ENCODE measurements at regions of chr18 and their contacts with region 1.

Region 1: GRCh38 chr18:48136531-48137332 is 206.3 kb upstream of the SMAD2 start:
- DNase-seq: peak in 1 of 2 donors; percentile 81
- H3K4me3 ChIP-seq: peak overlapping the region; percentile 38
- CTCF ChIP-seq: no peak
- POLR2A ChIP-seq: no peak

Region 2: DNA sequence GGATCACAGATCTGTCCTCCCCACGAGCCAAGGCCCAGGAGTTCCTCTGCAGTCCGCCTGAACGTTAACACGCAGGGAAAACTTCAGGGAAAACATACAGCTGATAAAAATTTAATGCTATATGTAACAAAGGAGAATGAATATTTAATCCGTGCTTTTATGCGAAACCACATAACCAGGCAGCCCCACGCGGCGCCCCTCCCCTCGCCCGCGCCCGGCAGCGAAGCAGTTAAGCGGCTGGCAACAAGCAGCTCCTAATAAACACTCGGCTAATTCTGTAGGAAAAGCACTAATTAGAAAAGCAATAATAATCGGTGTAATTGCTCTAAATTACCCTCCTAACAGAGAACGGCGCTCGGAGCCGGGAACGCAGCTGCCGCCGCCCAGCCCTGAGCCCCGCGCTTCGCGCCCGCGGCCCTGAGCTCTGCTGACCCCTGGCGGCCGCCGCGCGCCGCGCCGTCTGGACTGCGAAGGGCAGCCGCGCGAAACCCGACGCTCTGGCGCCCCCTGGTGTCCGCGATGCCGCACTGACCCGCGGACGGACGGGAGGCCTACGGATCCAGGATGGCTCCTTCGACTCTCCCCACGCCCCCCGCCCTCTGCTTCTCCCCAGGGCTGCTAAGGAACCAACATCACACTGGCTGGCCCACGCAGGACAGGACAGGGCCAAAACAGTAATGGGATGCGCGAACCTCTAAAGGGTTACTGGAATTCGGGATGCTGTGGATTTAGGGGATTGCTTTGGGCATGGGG is 387.7 kb before region 1 on chr18:
- intact Hi-C with region 1: no loop called
- DNase-seq: peak; percentile 31 to 94
- H3K4me3 ChIP-seq: no peak overlapping the region
- CTCF ChIP-seq: peak in 2 of 3 donors; percentile 82 to 93
- POLR2A ChIP-seq: no peak

Region 3: GRCh38 chr18:48073231-48073930 is 63.4 kb before region 1 on chr18:
- intact Hi-C with region 1: loop called (anchors 10 kb)
- DNase-seq: no peak
- H3K4me3 ChIP-seq: no peak overlapping the region
- CTCF ChIP-seq: no peak
- POLR2A ChIP-seq: no peak

Region 4: GRCh38 chr18:48203961-48204666 is 67.4 kb after region 1 on chr18:
- intact Hi-C with region 1: no loop called
- DNase-seq: peak in 1 of 2 donors; percentile 71
- H3K4me3 ChIP-seq: no peak overlapping the region
- CTCF ChIP-seq: no peak
- POLR2A ChIP-seq: no peak

Measured in lower leg skin (tissue), 4 donors.